Psoas muscle (tissue), 8 donors: ENCODE measurements at regions of chr1 and their contacts with region 1.

Region 1: DNA sequence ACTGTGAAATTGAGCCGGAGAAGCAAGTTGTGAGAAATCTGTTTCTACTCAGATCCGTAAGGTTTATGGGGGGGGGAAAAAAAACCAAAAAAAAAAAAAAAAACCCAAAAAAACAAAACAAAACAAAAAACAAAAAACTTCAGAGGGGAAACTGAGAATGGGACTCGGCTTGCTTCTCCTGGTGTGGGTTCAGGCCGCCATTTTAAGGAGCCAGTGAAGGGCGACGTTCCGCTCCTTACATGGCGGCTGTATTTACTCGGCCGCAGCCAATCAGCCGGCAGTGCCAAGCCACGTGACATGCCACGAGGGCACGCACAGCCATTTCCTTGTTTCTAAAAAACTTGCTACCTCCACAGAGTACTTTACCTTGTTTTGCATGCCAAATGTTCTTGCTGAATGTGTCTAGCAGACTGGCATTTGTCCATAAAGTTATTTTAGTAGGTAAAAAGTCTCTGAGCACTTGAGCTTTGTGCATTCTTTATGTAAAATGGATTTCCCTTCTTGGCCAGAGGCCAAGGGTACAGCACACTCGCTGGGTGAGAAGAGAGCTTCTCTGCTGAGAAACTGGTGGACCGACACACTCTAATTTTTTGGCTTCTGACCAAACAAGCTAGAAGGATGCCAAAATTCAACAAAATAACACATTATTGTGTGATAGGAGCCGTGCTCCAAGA is 101.8 kb downstream of the NFIA start:
- DNase-seq: peak; percentile 93 to 97
- ATAC-seq: peak; percentile 89 to 94 (median 90)
- H3K4me3 ChIP-seq: peak overlapping the region; percentile 66
- H3K27ac ChIP-seq: peak overlapping the region; percentile 94
- H3K4me1 ChIP-seq: peaks cover 71% of the 10 kb centered on the region
- H3K27me3 ChIP-seq: no peaks in the 10 kb centered on the region
- CTCF ChIP-seq: no peak

Region 2: GRCh38 chr1:60705026-60705425 is 479.2 kb before region 1 on chr1:
- intact Hi-C with region 1: no loop called
- DNase-seq: no peak
- ATAC-seq: no peak
- H3K4me3 ChIP-seq: no peak overlapping the region
- H3K27ac ChIP-seq: no peak overlapping the region
- H3K4me1 ChIP-seq: no peaks in the 10 kb centered on the region
- H3K27me3 ChIP-seq: no peaks in the 10 kb centered on the region
- CTCF ChIP-seq: no peak

Region 3: DNA sequence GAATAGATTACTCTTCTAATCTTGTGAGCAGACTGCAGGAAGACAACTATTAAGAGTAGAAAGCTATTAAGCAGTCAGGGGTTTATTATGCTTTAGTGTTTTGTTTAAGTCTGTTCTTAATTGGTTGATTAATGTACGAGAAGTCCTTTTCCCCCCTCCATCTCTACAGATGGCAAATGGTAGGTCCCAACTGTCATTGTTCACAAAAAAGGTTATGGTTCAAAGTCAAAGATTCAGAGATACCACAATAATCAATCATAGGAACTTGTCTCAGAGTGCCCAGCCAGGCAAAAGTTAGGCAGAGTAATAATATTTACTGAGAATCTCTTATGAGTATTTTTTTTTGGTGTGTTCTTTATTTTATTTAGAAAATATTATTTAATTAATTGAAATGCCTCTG is 75.0 kb before region 1 on chr1:
- intact Hi-C with region 1: no loop called
- DNase-seq: no peak
- ATAC-seq: no peak
- H3K4me3 ChIP-seq: no peak overlapping the region
- H3K27ac ChIP-seq: no peak overlapping the region
- H3K4me1 ChIP-seq: peaks cover 37% of the 10 kb centered on the region
- H3K27me3 ChIP-seq: no peaks in the 10 kb centered on the region
- CTCF ChIP-seq: no peak

Region 4: DNA sequence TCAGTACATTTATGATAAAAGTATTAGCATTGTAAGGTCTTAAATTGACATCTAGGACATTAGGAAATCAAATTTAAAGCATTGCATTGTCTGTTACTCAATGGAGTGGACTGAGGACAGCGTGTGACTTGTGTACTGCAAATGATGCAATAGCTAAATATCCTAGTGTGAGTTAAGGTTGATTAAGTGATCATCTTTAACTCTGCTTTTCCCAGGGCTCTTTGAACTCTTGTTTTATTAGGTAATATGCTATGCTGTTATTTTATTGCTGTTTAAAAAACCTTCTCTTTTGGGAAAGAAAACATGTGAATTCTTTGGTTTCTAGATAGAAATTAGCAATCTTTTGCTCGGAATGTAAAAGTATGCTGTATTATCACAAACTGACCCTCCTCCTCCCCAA is 63.2 kb before region 1 on chr1:
- intact Hi-C with region 1: loop called in 1 of 2 experiments (anchors 10 kb)
- DNase-seq: no peak
- ATAC-seq: peak; percentile 77 to 84 (median 79)
- H3K4me3 ChIP-seq: peak overlapping the region; percentile 62
- H3K27ac ChIP-seq: peak overlapping the region; percentile 91
- H3K4me1 ChIP-seq: peaks cover 90% of the 10 kb centered on the region
- H3K27me3 ChIP-seq: no peaks in the 10 kb centered on the region
- CTCF ChIP-seq: no peak

Region 5: DNA sequence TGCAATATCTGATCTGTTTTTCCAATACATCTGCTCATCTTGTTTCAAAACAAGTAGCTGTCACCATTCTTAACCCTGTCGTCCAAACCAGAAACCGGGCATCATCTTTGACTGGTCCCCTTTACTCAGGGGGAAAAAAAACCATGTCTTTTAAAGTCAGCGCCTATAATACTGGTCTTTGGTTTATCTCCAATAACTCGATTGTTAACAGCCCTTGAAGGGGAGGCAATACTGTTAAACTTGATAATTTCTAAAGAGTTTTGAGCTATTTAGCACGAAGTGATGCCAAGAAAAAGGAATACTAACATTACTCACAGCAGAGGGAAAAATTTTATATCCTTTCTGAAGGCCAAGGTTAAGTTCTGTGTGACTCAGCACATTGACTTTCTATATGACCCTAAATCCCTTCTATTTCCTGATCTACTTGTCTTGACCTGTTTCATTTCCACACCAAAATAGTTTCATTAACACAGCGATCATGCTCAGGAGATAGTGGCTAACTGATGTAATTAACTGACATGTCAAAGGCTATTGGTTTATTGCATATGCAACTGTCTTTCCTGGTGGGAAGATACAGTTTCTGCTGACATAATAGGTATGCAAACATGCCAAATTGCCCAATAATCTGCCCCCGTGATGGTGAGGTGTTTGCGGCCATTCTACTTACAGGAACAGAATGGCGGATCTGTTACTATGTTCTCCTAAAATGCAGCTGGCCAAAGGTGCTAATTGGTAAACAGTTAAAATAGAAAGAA is 42.7 kb before region 1 on chr1:
- intact Hi-C with region 1: loop called in 1 of 2 experiments (anchors 5 kb)
- DNase-seq: no peak
- ATAC-seq: peak; percentile 55 to 83 (median 78)
- H3K4me3 ChIP-seq: peak overlapping the region; percentile 50
- H3K27ac ChIP-seq: peak overlapping the region; percentile 88
- H3K4me1 ChIP-seq: peaks cover 40% of the 10 kb centered on the region
- H3K27me3 ChIP-seq: no peaks in the 10 kb centered on the region
- CTCF ChIP-seq: no peak